ENCODE measurements at regions of chr9 and their contacts with region 1.

Region 1: DNA sequence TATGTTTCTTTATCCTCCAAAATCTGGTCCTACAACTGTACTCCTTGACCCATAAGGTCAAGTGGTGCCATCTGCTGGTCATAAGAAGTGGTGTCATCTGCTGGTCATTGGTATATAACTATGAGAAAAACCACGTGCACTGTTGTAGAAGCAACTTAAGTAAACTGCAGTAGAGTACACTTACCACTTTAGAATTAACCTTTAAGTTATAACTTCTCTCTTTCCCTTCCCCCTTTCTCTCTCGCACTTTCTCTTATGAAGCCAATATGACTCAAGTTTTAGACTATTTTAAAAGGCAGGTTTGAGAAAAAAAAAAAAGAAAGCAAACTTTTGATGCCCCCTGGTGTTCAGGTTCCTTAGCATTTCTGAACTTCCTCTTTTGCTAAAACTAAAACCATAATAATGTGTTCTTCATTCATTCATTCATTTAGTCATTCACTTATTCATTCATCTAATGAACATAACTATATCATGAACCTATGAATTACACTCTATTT is 12.8 kb upstream of the MTAP start:
- DNase-seq: peak; percentile 24 to 48
- ATAC-seq: peak; percentile 97 to 98
- H3K4me3 ChIP-seq: peak overlapping the region in 1 of 4 donors; percentile 22
- H3K27ac ChIP-seq: no peak overlapping the region
- H3K4me1 ChIP-seq: no peaks in the 10 kb centered on the region
- H3K27me3 ChIP-seq: peaks cover 0 to 2% (median 0%) of the 10 kb centered on the region in 3 donors
- CTCF ChIP-seq: peak; percentile 57 to 82 (median 63)
- POLR2A ChIP-seq: no peak

Region 2: DNA sequence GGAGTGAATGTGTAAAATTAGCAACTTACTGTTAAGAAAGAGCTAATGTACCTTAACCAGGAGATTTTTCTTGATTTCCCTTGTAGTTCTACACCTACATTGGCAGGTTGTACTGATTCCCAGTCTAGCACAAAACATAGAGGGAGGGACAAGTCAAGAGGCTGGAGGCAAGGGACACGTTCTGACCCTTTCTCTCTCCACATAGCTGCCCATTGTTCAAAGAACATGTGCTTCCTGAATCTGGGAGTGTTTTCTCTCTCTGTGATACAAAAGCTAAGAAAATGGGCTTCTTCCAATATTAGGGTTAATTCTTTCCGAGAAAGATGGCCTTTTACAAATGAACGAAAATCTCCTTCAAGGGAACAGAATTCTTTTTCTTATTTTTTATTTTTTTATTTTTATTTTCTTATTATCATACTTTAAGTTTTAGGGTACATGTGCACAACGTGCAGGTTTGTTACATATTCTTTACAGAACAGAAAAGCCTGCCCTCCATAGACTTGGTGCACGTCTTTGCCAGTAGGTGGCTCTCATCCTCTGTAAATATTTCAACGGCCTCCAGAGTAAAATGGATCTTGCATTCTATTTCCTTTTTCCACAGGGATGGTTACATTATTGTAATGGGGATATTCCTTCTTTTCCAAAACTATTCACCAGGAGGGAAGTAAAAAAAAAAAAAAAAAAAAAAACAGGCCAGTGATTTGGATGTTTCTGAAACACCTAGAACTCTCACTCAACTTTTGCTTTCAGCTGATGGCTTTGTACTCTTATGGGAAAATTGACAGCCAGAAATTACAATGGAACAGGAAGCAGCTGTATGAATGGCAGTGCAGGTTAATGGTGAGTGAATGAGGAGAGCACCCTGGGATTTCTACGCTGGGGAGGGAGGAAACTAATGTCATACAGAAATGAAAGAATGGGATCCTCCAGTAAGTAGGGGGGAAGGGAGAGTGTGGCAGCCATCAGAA is 471.3 kb before region 1 on chr9:
- in situ Hi-C with region 1: loop called in 3 of 4 experiments (anchors 5 to 10 kb)
- intact Hi-C with region 1: no loop called
- DNase-seq: no peak
- ATAC-seq: peak; percentile 50 to 60
- H3K4me3 ChIP-seq: no peak overlapping the region
- H3K27ac ChIP-seq: no peak overlapping the region
- H3K4me1 ChIP-seq: no peaks in the 10 kb centered on the region
- H3K27me3 ChIP-seq: no peaks in the 10 kb centered on the region
- CTCF ChIP-seq: peak; percentile 11 to 60 (median 25)
- POLR2A ChIP-seq: no peak